CD4-positive, alpha-beta T cell (primary cell): ENCODE measurements at regions of chr1 and their contacts with region 1.

Region 1: DNA sequence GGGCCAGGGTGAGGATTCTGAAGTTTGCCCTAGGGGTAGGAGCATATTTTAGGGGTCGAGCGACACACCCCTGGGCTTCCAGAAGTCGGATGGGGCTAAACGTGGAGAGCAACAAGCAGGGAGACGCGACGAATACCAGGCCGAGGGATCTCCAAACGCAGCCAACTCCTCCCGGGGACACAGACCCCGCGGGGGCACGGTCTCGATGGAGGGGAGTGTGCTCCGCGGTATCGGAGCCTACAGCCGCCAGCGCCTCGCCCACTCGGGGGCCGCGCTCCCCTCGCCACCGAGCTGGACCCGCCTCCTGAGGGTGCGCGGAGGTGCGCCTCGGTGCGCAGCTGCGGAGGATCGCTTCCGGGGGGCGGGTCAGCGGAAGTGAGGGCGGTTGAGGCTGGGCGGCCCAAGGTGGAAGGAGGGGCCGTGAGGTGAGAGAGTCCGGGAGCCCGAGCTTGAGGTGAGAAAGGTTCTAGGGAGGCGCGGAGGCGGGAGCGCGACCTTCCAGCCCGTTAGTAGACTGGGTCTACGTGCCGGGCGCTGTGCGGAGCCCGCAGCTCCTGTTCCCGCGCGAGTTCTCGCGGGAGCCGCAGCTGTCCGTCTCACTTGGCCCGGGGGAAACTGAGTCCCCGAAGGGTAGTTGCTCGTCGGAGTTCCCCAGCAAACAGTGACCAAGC is at the start of gene MTFR1L:
- DNase-seq: peak; percentile 87 to 97 (median 93)
- ATAC-seq: peak; percentile 85
- H3K4me3 ChIP-seq: peak within 1 kb of the TSS; percentile 97
- H3K4me3 Mint-ChIP-seq: peak within 1 kb of the TSS; percentile 98
- H3K27ac ChIP-seq: peak within 1 kb of the TSS; percentile 88 to 89
- H3K27ac Mint-ChIP-seq: peak within 1 kb of the TSS; percentile 97
- H3K4me1 ChIP-seq: peaks cover 44% of the 10 kb centered on the region
- H3K4me1 Mint-ChIP-seq: peaks cover 49% of the 10 kb centered on the region
- H3K27me3 ChIP-seq: no peaks in the 10 kb centered on the region
- H3K27me3 Mint-ChIP-seq: no peaks in the 10 kb centered on the region
- CTCF ChIP-seq: no peak
- total RNA-seq, gene MTFR1L: 25.5 to 28.0 TPM

Region 2: DNA sequence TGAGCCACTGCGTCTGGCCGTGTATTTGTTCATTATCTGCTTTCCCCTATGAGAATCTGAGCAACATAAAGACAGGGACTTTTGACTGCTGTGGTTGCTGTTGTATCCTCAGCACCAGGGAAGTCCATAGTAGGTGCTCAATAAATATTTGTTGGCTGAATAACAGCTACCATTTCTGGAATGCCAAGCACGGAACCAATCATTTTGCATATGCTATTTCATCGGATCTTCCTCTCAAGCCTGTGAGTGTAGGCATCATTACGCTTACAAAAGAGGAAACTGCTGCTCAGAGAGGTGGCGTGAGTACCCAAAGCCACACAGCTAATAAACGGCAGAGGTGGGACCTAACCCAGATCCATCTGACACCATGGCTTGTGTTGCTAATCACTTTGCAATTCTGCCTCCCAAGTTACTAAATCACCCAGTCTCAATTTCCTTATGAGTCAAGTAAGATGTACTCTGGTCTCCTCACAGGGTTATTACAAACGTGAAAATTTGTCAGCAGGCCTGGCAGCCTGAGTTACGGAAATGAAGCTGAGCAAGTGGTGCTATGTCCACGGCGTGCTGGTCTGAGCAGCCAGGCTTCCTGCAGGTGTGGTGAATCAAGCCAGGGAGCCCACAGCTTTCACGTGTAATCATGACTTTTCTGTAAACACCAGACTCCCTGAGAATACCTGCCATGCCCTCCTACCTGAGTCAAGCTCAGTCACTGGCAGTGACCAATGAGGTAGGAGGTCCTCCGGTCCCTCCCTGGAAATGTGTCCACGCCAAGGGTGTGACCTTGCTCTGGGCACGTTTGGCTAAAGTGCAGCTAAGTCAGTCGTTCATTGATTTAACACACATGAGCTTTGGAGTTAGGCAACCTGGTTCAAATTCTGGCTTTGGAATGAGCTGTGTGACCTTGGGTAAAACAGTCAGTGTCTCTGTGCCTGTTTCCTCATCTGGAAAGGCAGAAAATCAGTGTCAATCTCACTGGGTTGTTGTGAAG is 394.3 kb before region 1 on chr1:
- CTCF ChIA-PET with region 1: no interaction called
- POLR2A ChIA-PET with region 1: interaction called, 10 read pairs
- intact Hi-C with region 1: loop called in 1 of 2 experiments (anchors 5 kb)
- DNase-seq: no peak
- ATAC-seq: no peak
- H3K4me3 ChIP-seq: no peak overlapping the region
- H3K4me3 Mint-ChIP-seq: no peak overlapping the region
- H3K27ac ChIP-seq: no peak overlapping the region
- H3K27ac Mint-ChIP-seq: no peak overlapping the region
- H3K4me1 ChIP-seq: no peaks in the 10 kb centered on the region
- H3K4me1 Mint-ChIP-seq: peaks cover 12% of the 10 kb centered on the region
- H3K27me3 ChIP-seq: no peaks in the 10 kb centered on the region
- H3K27me3 Mint-ChIP-seq: no peaks in the 10 kb centered on the region
- CTCF ChIP-seq: no peak

Region 3: DNA sequence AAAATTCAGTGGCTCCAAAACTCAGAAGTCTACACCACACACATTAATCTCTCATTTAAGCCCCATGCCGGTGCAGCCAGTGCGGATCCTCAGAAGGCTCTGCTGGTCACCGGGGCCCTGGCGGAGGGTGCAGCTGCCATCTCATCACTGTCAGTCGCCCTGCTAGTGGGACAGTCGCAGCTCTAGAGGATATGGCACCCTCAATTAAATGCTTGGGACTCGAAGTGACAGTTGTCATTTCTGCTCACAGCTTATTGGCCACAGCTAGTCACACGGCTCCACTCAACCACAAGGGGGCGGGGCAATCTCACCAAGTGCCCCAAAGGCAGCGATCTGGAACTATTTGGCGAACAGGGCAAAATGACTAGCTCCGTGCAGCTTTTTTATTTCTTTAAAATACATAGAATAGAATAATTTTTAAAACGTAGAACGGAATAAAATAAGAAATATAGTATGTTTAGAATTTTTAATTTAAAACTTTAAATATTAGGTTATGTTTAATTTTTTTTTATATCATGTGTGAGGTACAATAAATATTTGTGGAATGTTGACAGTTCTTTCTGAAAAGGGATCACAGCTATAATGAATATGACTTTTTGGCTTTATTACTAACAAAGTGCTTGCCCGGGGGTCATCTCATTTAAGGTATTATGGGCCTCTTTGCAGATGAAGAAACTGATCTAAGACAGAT is 211.1 kb before region 1 on chr1:
- CTCF ChIA-PET with region 1: no interaction called
- POLR2A ChIA-PET with region 1: interaction called, 19 read pairs
- intact Hi-C with region 1: no loop called
- DNase-seq: peak; percentile 78 to 95 (median 86)
- ATAC-seq: peak; percentile 99
- H3K4me3 ChIP-seq: peak overlapping the region; percentile 6
- H3K4me3 Mint-ChIP-seq: peak overlapping the region; percentile 45
- H3K27ac ChIP-seq: no peak overlapping the region
- H3K27ac Mint-ChIP-seq: no peak overlapping the region
- H3K4me1 ChIP-seq: peaks cover 17% of the 10 kb centered on the region
- H3K4me1 Mint-ChIP-seq: peaks cover 25% of the 10 kb centered on the region
- H3K27me3 ChIP-seq: no peaks in the 10 kb centered on the region
- H3K27me3 Mint-ChIP-seq: no peaks in the 10 kb centered on the region
- CTCF ChIP-seq: peak; percentile 71

Region 4: GRCh38 chr1:25802915-25803314 is 16.8 kb before region 1 on chr1:
- CTCF ChIA-PET with region 1: no interaction called
- POLR2A ChIA-PET with region 1: interaction called, 17 read pairs
- intact Hi-C with region 1: no loop called
- DNase-seq: peak in 2 of 14 experiments; percentile 23 to 39
- ATAC-seq: no peak
- H3K4me3 ChIP-seq: no peak overlapping the region
- H3K4me3 Mint-ChIP-seq: peak overlapping the region; percentile 79
- H3K27ac ChIP-seq: no peak overlapping the region
- H3K27ac Mint-ChIP-seq: peak overlapping the region; percentile 35
- H3K4me1 ChIP-seq: peaks cover 46% of the 10 kb centered on the region
- H3K4me1 Mint-ChIP-seq: peaks cover 59% of the 10 kb centered on the region
- H3K27me3 ChIP-seq: no peaks in the 10 kb centered on the region
- H3K27me3 Mint-ChIP-seq: no peaks in the 10 kb centered on the region
- CTCF ChIP-seq: no peak

Region 5: DNA sequence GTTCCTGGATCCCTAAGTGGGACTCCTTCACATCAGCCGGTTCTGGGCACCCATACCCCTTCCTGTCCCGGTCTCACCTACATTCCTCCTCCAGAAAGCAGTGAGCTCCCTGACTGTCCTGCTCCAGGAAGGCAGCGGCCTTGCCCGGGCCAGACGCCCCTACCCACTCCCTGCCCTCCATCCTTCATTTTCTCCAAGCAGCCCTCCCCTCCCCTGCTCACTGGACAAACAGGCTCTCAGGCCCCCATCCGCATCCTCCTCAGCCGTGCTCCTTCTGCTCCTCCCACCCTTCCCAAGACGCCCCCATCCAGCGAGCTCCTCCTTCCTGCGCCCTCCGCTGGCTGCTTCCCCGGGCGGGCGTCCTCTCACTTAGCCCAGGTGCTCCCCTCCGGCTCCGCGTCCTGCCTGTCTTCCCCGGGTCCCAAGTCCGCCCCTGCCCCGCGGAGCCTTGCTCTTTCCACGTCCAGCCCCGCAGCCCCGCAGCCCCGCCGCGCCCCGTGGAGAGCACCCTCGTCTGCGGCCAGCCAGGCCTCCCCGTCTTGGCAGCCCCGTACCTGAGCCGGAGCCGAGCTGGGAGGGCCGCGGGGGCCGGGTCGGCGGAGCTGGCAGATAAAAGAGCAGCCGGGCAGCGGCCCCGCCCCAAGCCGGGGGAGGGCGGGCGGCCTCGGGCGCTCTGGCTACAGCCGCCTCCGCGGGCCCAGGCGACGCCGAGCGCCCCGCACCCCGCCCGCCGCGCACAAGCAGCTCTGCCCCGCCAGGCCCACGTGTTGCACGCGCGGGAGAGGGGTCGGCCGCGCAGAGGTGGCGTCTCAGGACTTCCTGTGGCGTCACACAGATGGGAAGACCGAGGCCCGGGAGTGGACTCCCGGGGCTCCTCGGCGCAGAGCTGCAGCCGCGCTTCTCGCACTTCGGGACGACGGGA is 55.5 kb after region 1 on chr1 and contains the start of gene PAQR7:
- CTCF ChIA-PET with region 1: interaction called, 5 read pairs
- POLR2A ChIA-PET with region 1: interaction called, 22 read pairs
- intact Hi-C with region 1: loop called in 1 of 2 experiments (anchors 5 kb)
- DNase-seq: peak in 13 of 14 experiments; percentile 19 to 81 (median 50)
- ATAC-seq: peak; percentile 84
- H3K4me3 ChIP-seq: peak within 1 kb of the TSS; percentile 66
- H3K4me3 Mint-ChIP-seq: peak within 1 kb of the TSS; percentile 88
- H3K27ac ChIP-seq: no peak within 1 kb of the TSS
- H3K27ac Mint-ChIP-seq: peak within 1 kb of the TSS; percentile 67
- H3K4me1 ChIP-seq: peaks cover 17% of the 10 kb centered on the region
- H3K4me1 Mint-ChIP-seq: peaks cover 10% of the 10 kb centered on the region
- H3K27me3 ChIP-seq: no peaks in the 10 kb centered on the region
- H3K27me3 Mint-ChIP-seq: no peaks in the 10 kb centered on the region
- CTCF ChIP-seq: no peak
- total RNA-seq, gene PAQR7: 1.1 to 1.5 TPM

Region 6: GRCh38 chr1:25905680-25906643 is 86.3 kb after region 1 on chr1 and contains the start of gene STMN1:
- CTCF ChIA-PET with region 1: no interaction called
- POLR2A ChIA-PET with region 1: interaction called, 10 read pairs
- intact Hi-C with region 1: no loop called
- DNase-seq: peak; percentile 81 to 94 (median 88)
- ATAC-seq: peak; percentile 75
- H3K4me3 ChIP-seq: peak within 1 kb of the TSS; percentile 72
- H3K4me3 Mint-ChIP-seq: peak within 1 kb of the TSS; percentile 98
- H3K27ac ChIP-seq: peak within 1 kb of the TSS; percentile 64 to 65
- H3K27ac Mint-ChIP-seq: peak within 1 kb of the TSS; percentile 97
- H3K4me1 ChIP-seq: peaks cover 22% of the 10 kb centered on the region
- H3K4me1 Mint-ChIP-seq: peaks cover 23% of the 10 kb centered on the region
- H3K27me3 ChIP-seq: no peaks in the 10 kb centered on the region
- H3K27me3 Mint-ChIP-seq: no peaks in the 10 kb centered on the region
- CTCF ChIP-seq: no peak
- total RNA-seq, gene STMN1: 25.2 to 25.6 TPM